Activated B cell treated with CpG ODN at 0.5 μM for 24 hours (primary cell): ENCODE measurements at regions of chr6 and their contacts with region 1.

Region 1: DNA sequence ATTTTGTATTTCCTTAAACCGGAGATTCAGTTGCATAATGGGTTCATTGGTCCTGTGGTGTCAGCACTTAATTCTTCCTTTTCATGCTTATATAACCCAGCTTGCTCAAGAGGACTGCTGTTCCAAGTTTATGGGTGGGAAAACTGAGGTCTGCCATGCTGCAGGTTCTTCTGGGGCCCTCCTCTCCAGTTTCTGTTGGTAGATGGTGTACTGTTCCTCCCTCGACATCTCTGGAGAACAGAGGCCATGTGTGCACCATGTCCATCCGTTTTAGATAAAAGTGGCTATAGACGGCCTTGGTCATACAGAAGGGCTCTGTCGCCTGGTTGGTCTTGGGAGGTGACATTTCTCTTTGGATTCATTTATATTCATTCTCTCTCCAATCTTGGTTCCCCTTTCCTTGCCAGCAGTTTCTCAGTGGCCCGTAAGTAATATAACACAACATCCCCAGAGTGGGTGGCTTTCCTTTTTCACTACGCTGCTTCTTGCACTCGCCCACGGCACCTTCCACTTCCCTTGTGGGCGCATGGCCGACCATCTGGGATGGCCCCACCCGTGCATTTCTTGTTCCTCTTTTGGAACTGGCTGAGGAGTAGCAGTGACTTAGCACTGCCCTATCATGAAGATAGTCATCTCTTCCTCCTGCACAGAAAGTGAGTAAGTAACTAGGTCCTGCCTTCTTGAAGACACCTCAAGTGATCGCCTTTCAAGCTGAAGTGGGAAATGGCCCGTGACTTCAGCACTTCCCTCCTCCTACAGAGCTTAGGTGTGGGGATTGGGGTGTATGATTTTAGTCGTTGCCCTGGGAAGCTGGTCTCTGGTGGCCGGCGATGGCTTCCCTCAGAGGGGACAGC is 94.2 kb downstream of the RREB1 start:
- DNase-seq: peak; percentile 65
- ATAC-seq: peak; percentile 94
- H3K4me3 Mint-ChIP-seq: peak overlapping the region; percentile 50
- H3K27ac Mint-ChIP-seq: peak overlapping the region; percentile 74
- H3K4me1 Mint-ChIP-seq: peaks cover 56% of the 10 kb centered on the region
- H3K27me3 Mint-ChIP-seq: no peaks in the 10 kb centered on the region
- CTCF ChIP-seq: no peak

Region 2: DNA sequence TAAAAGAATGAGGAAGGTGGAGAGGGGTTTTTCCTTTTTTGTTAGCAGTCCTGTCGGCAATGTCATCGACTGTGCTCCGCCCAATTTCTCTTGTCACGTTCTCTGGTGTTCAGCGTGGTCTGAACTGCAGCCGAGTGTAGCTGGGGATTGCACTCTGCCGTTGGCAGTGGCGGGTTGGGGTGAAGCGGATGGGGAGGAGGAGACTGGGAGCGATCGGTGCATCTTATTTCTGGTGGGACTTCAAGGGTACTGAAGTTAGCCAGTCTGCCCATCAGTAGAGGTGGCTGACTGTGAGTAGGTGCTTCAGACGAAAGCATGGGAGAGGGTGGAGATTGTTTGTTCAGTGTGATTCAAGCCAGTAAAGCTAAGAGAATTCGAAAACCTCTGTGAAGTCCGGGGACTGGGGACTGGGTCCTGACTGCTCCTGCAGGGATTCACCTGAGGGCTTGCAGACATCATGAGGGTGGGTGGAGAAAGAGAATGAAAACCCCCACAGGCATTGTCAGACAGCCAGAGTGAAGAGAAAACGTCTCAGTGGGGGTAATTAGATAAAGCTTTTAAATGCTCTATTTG is 89.1 kb before region 1 on chr6:
- CTCF ChIA-PET with region 1: no interaction called
- POLR2A ChIA-PET with region 1: interaction called, 6 read pairs
- intact Hi-C with region 1: loop called (anchors 1 kb)
- DNase-seq: peak; percentile 44
- ATAC-seq: peak; percentile 72
- H3K4me3 Mint-ChIP-seq: peak overlapping the region; percentile 82
- H3K27ac Mint-ChIP-seq: peak overlapping the region; percentile 92
- H3K4me1 Mint-ChIP-seq: peaks cover 74% of the 10 kb centered on the region
- H3K27me3 Mint-ChIP-seq: no peaks in the 10 kb centered on the region
- CTCF ChIP-seq: no peak

Region 3: DNA sequence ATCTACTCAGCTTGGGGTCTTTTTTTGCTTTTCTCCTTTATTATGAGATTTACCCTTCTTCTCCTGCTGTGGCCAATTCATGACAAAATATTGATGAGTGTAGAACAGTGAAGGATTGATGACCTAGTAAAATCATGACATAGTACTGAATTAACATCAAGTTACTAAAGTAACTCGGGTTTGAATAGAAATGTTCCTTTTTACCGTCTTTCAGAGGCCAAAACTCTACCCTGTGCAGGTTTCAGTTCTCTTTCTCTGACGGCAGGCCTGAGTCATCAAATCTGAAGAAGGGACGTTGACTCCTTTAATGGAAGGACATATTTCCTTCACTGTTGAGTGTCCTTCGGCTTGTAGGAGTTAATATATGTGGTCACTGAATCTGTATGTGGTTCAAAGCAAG is 13.4 kb before region 1 on chr6:
- CTCF ChIA-PET with region 1: no interaction called
- POLR2A ChIA-PET with region 1: no interaction called
- intact Hi-C with region 1: loop called (anchors 1 kb)
- DNase-seq: no peak
- ATAC-seq: peak; percentile 97
- H3K4me3 Mint-ChIP-seq: peak overlapping the region; percentile 45
- H3K27ac Mint-ChIP-seq: peak overlapping the region; percentile 72
- H3K4me1 Mint-ChIP-seq: peaks cover 21% of the 10 kb centered on the region
- H3K27me3 Mint-ChIP-seq: no peaks in the 10 kb centered on the region
- CTCF ChIP-seq: no peak